ENCODE measurements at regions of chr5 and their contacts with region 1.

Region 1: DNA sequence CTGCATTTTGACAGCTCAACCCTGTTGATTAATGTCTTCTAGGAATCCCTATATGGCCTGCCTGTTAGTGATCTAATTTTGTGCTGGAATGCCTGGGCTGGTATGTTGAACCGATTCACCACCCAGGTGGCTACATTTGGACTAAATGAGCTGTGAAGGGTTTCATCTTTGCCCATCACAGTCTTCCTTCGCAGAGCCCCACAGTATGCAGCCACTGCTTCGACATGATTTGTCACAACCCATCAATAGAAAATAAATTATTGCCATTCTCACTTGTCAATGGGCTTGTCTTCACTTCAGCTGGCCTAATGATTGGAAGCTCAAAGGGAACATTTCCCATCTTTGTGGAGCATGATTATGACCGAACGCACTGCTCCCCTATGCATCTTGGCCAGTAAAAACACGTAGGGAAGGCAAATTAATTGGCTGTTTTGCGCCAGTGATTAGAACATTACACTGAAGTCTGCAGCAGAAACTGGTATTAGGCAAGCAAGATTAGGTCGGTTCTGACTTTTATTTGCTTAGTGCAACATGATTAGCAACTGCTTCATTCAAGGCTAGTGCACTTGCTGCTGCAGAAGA is 408.5 kb downstream of the KIAA0825 start:
- DNase-seq: no peak
- H3K4me3 ChIP-seq: no peak overlapping the region
- H3K27ac ChIP-seq: no peak overlapping the region
- H3K4me1 ChIP-seq: no peaks in the 10 kb centered on the region
- H3K27me3 ChIP-seq: no peaks in the 10 kb centered on the region
- CTCF ChIP-seq: no peak

Region 2: GRCh38 chr5:93735378-93735777 is 474.5 kb before region 1 on chr5:
- intact Hi-C with region 1: no loop called
- DNase-seq: no peak
- H3K4me3 ChIP-seq: no peak overlapping the region
- H3K27ac ChIP-seq: no peak overlapping the region
- H3K4me1 ChIP-seq: no peaks in the 10 kb centered on the region
- H3K27me3 ChIP-seq: no peaks in the 10 kb centered on the region
- CTCF ChIP-seq: no peak

Region 3: DNA sequence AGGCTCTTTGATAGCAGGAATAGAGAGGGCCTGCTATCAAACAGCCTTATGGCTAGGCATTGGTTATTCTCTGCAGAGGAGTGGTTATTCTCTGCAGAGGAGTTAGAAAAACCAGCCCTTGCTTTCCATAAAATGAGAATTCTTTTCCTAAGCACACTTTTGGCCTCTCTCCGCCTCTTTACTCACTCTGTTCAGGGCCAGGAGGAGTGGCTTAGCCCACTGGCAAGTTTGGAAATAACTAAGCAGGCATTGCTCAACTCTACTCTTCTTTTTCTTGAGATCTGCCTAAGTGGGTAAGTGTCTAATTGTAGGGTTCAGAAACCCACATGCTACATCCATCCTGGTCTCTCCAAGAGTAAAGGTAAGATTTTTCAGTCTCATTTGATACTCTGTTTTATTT is 66.9 kb after region 1 on chr5:
- intact Hi-C with region 1: no loop called
- DNase-seq: no peak
- H3K4me3 ChIP-seq: no peak overlapping the region
- H3K27ac ChIP-seq: no peak overlapping the region
- H3K4me1 ChIP-seq: no peaks in the 10 kb centered on the region
- H3K27me3 ChIP-seq: no peaks in the 10 kb centered on the region
- CTCF ChIP-seq: no peak

Region 4: DNA sequence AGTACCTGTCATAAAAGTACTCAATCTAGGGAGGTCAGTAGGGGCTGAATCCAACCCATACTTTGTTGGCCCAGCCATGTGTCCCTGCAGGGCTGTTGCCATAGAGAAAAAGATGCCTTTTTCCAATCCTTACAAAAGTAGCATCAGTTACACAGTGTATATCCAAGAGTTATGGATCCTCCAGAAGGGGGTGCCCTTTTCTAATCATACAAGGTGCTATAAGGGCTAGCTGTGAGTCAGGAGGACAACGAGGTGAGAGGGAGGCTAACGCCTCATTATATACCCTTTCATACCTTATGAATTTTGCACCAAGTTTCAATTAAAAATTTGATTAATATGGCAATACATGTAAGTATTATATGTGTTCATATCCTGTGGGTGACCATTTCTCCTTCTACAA is 403.7 kb after region 1 on chr5:
- intact Hi-C with region 1: loop called (anchors 5 kb)
- DNase-seq: no peak
- H3K4me3 ChIP-seq: no peak overlapping the region
- H3K27ac ChIP-seq: no peak overlapping the region
- H3K4me1 ChIP-seq: no peaks in the 10 kb centered on the region
- H3K27me3 ChIP-seq: no peaks in the 10 kb centered on the region
- CTCF ChIP-seq: no peak

Measured in colonic mucosa (tissue), 4 donors.